Right lobe of liver (tissue), 6 donors: ENCODE measurements at regions of chr5 and their contacts with region 1.

Region 1: DNA sequence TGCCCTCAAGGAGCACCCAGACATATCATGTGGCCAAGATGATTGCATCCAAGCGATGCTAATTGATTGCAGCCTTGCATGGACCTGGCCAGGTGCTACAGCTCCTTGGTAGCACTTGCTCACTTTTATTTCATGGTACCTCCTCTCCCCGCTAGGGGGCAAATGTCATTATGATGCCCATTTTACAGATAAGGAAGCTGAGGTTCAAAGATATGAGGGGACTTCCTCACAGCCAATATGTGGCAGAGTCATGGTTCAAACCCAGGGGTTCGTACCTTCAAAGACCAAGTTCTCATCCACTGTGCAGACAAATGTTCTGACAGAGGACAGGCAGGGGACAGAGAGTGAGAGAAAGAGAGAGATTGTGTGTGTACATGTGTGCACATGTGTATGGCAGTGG is 21.9 kb upstream of the KCNMB1 start:
- DNase-seq: no peak
- ATAC-seq: no peak
- H3K4me3 ChIP-seq: no peak overlapping the region
- H3K27ac ChIP-seq: no peak overlapping the region
- H3K4me1 ChIP-seq: no peaks in the 10 kb centered on the region
- H3K27me3 ChIP-seq: no peaks in the 10 kb centered on the region
- CTCF ChIP-seq: no peak
- POLR2A ChIP-seq: no peak

Region 2: GRCh38 chr5:170225326-170226128 is 185.6 kb before region 1 on chr5:
- intact Hi-C with region 1: loop called in 1 of 2 experiments (anchors 10 kb)
- DNase-seq: peak; percentile 55 to 70 (median 58)
- ATAC-seq: peak; percentile 79 to 83 (median 81)
- H3K4me3 ChIP-seq: no peak overlapping the region
- H3K27ac ChIP-seq: no peak overlapping the region
- H3K4me1 ChIP-seq: no peaks in the 10 kb centered on the region
- H3K27me3 ChIP-seq: no peaks in the 10 kb centered on the region
- CTCF ChIP-seq: peak; percentile 60 to 77 (median 70)
- POLR2A ChIP-seq: no peak

Region 3: DNA sequence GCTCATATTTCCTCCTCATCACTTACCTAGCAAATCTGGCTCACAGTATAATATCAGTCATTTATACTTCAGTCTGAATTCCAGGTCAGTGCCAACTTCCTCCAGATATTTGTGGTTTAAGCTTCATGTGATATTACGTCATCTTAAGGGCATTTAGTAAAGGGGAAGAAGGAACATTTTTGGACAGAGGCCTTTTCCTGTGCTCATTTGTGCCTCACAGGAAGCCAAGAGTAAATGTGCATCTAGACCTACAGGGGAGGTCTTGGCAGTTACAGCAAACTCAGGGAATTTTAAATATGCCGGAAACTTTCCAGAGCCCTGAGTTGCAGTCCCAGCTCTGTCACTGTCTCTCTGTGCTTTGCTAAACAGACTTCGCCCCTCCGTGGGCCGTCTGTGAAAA is 80.4 kb after region 1 on chr5:
- intact Hi-C with region 1: no loop called
- DNase-seq: no peak
- ATAC-seq: peak; percentile 56 to 80 (median 66)
- H3K4me3 ChIP-seq: no peak overlapping the region
- H3K27ac ChIP-seq: peak overlapping the region in 2 of 3 donors; percentile 28 to 33
- H3K4me1 ChIP-seq: no peaks in the 10 kb centered on the region
- H3K27me3 ChIP-seq: no peaks in the 10 kb centered on the region
- CTCF ChIP-seq: no peak
- POLR2A ChIP-seq: no peak